ENCODE measurements at regions of chr5 and their contacts with region 1.

Region 1: DNA sequence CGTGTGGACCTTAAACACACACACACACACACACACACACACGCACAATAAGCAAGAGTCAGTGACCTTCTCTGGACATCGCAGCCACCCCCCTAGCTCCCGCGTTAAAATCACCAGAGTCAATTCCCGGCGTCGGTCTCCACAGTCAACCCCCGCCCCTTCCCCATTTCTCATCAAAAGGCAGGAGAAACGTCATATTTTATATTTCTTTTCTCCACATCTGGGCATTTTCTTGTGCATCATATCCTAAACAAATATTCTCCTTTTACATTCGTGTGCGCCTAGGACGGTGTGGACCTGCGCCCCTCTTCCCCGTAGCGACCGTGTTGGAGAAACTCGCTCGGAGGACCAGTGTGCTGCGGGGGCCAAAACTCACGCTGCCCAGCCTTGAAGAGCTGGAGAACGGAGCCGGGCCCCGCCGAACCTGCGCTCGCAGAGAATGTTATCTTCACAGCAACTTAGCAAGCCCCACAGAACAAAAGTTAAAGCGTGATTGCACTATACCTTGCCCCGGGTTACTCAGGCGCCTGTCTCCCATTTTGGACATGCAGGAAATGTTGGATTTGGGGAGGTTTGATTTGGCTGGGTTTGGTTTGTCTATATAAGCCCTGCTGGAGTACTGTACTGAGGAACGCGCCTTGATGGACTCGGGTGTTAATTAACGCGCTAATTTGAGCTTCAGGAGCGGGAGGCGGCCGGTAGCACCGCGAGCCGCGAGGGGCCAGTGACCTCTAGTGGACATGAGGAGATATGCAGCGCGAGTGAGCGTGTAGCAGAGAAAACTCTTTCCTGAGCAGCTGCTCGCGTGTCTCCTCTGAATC is 192.4 kb downstream of the MEF2C start:
- DNase-seq: peak; percentile 47 to 73
- ATAC-seq: peak; percentile 90

Region 2: DNA sequence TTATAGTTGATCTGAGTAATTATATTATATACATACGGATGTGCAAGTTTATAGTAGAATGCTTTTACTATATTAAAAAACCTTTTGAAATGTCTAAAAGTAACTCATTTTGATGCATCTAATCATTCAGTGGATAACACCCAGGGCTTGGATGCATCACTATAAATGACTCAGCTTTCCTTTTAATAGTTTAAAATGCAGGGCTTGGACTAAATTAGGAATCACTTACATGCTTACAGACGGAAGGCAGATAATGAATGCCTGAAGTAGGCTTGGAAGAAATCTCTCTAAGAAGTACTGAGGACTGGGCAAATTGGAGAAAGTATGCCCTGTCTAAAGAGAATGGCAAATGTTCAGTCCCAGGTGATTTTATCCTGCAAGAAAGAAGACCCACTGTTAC is 915.4 kb before region 1 on chr5:
- intact Hi-C with region 1: loop called (anchors 5 to 10 kb)
- DNase-seq: no peak
- ATAC-seq: no peak

Region 3: GRCh38 chr5:88140856-88141752 is 549.5 kb before region 1 on chr5:
- intact Hi-C with region 1: loop called in 1 of 2 experiments (anchors 5 kb)
- DNase-seq: peak; percentile 89 to 95
- ATAC-seq: peak; percentile 98

Region 4: GRCh38 chr5:88875341-88876234 is 185.0 kb after region 1 on chr5:
- intact Hi-C with region 1: no loop called
- DNase-seq: no peak
- ATAC-seq: peak; percentile 48

Measured in left colon (tissue), 2 donors.